GM23248 (cell line): ENCODE measurements at regions of chr15 and their contacts with region 1.

Region 1: DNA sequence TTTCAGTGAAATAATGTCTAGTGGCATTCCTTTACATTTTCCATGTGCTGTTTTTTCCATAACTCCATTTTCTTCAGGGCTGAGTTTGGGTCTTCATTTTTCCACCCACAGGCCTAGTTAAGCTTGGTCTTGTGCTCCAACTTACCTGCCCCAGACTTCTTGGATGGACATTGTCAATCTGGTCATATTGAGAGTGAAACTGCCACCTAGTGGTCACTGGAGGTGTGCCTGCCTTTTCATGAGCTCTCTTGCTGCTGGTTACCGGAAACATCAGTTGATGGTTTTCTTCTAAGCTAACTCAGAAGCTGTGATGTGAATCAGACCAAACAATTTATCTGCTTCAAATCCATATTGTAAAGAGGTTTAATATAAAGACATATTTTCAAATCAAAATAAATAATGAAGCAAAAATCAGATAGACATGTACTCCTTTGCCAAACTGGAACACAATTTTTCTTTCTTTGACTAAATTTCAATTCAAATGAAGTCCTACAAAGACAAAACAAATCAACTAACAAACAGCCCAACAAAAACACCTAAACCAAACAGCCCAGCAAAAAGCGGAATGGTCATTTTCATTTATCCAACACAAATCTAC is 135.1 kb upstream of the RASGRP1 start:
- DNase-seq: peak; percentile 73
- H3K4me3 ChIP-seq: no peak overlapping the region
- H3K27ac ChIP-seq: no peak overlapping the region
- H3K4me1 ChIP-seq: 0 out of 2 replicates have a peak, but pooled peaks cover 6% of the 10 kb centered on the region
- H3K27me3 ChIP-seq: no peaks in the 10 kb centered on the region

Region 2: GRCh38 chr15:38461066-38461833 is 238.5 kb before region 1 on chr15:
- in situ Hi-C with region 1: loop called (anchors 10 kb)
- DNase-seq: peak; percentile 59
- H3K4me3 ChIP-seq: peak overlapping the region; percentile 30; the same call in 1 of the 2 replicates
- H3K27ac ChIP-seq: 0 out of 2 replicates have a peak overlapping the region, but pooled peaks have one; percentile 7
- H3K4me1 ChIP-seq: peaks cover 7% of the 10 kb centered on the region
- H3K27me3 ChIP-seq: no peaks in the 10 kb centered on the region

Region 3: DNA sequence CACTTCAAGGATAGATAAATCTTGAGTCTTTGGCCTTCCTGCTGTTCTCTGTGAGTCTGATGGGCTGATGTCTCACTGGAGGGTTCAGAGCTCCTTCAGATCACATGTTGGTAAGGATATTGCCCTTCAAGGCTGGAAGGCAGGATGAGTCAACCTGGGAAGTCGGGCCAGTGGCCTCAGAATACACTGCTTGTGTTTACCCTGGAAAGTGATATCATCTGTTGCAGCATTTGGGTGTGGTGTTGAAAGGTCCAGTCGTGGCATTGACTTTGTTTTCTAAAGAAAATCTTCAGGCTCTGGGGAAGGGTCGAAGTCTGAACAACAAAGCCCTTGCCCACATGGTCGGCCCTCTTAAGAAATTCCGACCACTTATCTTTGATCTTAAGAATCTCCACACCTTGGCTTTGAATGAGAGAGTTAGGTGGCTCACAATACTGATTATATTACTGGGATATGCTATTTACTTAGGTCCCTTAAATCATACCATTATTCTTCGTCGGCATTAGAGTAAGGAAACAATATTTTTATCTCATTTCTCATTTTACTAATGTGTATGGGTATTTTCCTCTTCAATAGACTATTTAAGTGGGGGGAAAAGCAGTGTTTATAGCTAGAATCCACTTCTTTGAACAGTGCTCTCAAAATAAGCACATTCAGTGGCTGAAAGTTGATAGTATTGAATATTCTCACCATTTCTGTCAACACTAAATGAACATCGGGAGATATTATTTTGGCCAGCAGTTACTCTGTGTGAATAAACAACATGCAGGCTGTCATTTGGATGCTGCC is 168.8 kb after region 1 on chr15:
- in situ Hi-C with region 1: no loop called
- DNase-seq: peak; percentile 97
- H3K4me3 ChIP-seq: no peak overlapping the region
- H3K27ac ChIP-seq: peak overlapping the region; percentile 99
- H3K4me1 ChIP-seq: peaks cover 50% of the 10 kb centered on the region
- H3K27me3 ChIP-seq: no peaks in the 10 kb centered on the region

Region 4: GRCh38 chr15:38886315-38887171 is 186.8 kb after region 1 on chr15:
- in situ Hi-C with region 1: no loop called
- DNase-seq: peak; percentile 88
- H3K4me3 ChIP-seq: peak overlapping the region; percentile 65
- H3K27ac ChIP-seq: peak overlapping the region; percentile 97
- H3K4me1 ChIP-seq: peaks cover 47% of the 10 kb centered on the region
- H3K27me3 ChIP-seq: no peaks in the 10 kb centered on the region

Region 5: DNA sequence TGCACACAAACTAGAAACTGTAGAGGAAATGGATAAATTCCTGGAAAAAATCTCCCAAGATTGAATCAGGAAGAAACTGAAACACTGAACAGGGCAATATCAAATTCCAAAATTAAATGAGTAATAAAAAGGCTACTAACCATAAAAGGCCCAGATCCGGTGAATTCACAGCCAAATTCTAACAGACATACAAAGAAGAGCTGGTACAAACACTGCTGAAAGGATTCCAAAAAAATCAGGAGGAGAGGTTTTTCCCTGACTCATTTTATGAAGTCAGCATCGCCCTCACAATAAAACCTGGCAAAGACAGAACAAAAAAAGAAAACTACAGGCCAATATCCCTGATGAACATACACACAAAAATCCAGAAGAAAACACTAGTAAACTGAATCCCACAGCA is 418.8 kb after region 1 on chr15:
- in situ Hi-C with region 1: loop called (anchors 25 kb)
- DNase-seq: peak; percentile 95
- H3K4me3 ChIP-seq: peak overlapping the region; percentile 50
- H3K27ac ChIP-seq: peak overlapping the region; percentile 78
- H3K4me1 ChIP-seq: peaks cover 45% of the 10 kb centered on the region
- H3K27me3 ChIP-seq: no peaks in the 10 kb centered on the region